ENCODE measurements at regions of chr6 and their contacts with region 1.

Region 1: GRCh38 chr6:34370361-34370760 is 22.1 kb downstream of the NUDT3 start:
- DNase-seq: no peak
- H3K4me3 ChIP-seq: no peak overlapping the region
- H3K27ac ChIP-seq: peak overlapping the region in 1 of 3 donors; percentile 54
- H3K4me1 ChIP-seq: peaks cover 7 to 11% of the 10 kb centered on the region in 2 donors
- H3K27me3 ChIP-seq: no peaks in the 10 kb centered on the region
- CTCF ChIP-seq: no peak
- POLR2A ChIP-seq: no peak

Region 2: GRCh38 chr6:34324738-34325444 is 45.5 kb before region 1 on chr6:
- intact Hi-C with region 1: loop called (anchors 10 kb)
- DNase-seq: peak; percentile 67 to 76
- H3K4me3 ChIP-seq: no peak overlapping the region
- H3K27ac ChIP-seq: peak overlapping the region; percentile 41 to 54 (median 49)
- H3K4me1 ChIP-seq: peaks cover 0 to 22% of the 10 kb centered on the region in 2 donors
- H3K27me3 ChIP-seq: no peaks in the 10 kb centered on the region
- CTCF ChIP-seq: no peak
- POLR2A ChIP-seq: peak in 1 of 2 donors; percentile 34